ENCODE measurements at regions of chr13 and their contacts with region 1.

Region 1: DNA sequence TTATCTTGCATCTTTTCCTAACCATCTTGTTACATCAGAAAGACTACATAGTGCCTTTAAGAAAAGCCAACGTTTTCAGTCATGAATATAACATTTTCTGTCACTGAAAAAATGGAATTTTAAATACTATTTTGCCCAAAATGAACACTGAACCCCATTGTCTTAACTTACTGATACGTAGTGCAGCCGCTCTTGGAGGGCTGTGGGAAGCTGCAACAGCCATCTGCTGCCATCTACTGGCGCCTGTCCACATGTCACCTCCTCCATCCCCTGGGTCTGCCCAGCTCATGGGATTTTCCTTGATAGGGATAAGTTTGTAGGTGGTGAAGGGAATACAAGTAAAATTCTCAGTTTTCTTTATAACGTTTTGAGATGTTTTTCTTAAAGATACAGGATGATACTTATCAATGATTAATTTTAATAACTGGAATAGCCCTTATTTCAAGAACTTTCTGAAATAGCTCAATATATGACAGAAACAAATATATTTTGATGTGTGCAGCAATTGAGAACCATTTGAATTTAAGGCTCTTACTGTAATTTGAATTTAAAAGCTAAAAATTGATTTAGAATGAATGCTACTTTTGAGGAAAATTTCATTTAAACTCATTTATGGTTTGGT is 73.7 kb downstream of the GGACT start:
- DNase-seq: peak; percentile 82
- H3K4me3 Mint-ChIP-seq: no peak overlapping the region
- H3K27ac Mint-ChIP-seq: no peak overlapping the region
- H3K4me1 Mint-ChIP-seq: peaks cover 21% of the 10 kb centered on the region
- H3K27me3 Mint-ChIP-seq: peaks cover 14% of the 10 kb centered on the region

Region 2: GRCh38 chr13:99909824-99910619 is 604.9 kb before region 1 on chr13:
- CTCF ChIA-PET with region 1: interaction called, 24 read pairs
- POLR2A ChIA-PET with region 1: no interaction called
- intact Hi-C with region 1: no loop called
- DNase-seq: no peak
- H3K4me3 Mint-ChIP-seq: no peak overlapping the region
- H3K27ac Mint-ChIP-seq: no peak overlapping the region
- H3K4me1 Mint-ChIP-seq: peaks cover 19% of the 10 kb centered on the region
- H3K27me3 Mint-ChIP-seq: peaks cover 21% of the 10 kb centered on the region

Region 3: DNA sequence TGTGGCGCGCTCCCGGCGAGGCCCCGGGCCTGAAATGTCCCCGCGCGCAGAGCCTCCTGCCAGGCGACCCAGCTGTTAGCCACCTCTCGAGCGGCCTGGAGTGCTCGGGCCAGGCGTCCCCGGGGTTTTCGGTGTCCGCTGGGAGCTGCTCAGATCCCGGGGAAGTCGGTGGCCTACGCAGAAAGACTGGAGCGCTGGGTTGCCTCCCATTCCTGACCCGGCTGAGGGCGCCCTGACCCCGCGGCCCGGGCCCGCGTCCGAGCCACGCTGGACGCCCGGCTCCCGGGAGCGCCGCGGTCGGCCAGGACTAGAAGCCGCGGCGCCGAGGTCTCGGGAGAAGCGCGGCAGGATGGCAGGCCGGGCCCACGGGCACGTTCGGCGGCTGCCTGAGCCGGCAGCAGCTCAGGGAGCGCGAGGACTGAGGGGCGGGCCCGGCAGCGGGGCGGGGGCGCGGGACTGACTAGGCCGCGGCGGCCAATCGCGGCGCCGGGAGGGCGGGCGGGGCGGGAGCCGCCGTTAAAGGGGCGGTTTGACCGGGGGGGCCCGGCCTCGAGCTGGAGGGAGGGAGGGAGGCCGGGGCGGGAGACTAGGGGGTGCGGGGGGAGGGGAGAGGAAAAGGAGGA is 534.6 kb before region 1 on chr13:
- CTCF ChIA-PET with region 1: interaction called, 5 read pairs
- POLR2A ChIA-PET with region 1: no interaction called
- intact Hi-C with region 1: loop called (anchors 10 kb)
- DNase-seq: peak; percentile 66
- H3K4me3 Mint-ChIP-seq: no peak overlapping the region
- H3K27ac Mint-ChIP-seq: no peak overlapping the region
- H3K4me1 Mint-ChIP-seq: peaks cover 18% of the 10 kb centered on the region
- H3K27me3 Mint-ChIP-seq: peaks cover 66% of the 10 kb centered on the region

Region 4: GRCh38 chr13:100235311-100235901 is 279.5 kb before region 1 on chr13:
- CTCF ChIA-PET with region 1: interaction called, 19 read pairs
- POLR2A ChIA-PET with region 1: no interaction called
- intact Hi-C with region 1: loop called (anchors 2 kb)
- DNase-seq: no peak
- H3K4me3 Mint-ChIP-seq: no peak overlapping the region
- H3K27ac Mint-ChIP-seq: no peak overlapping the region
- H3K4me1 Mint-ChIP-seq: peaks cover 4% of the 10 kb centered on the region
- H3K27me3 Mint-ChIP-seq: no peaks in the 10 kb centered on the region

Region 5: DNA sequence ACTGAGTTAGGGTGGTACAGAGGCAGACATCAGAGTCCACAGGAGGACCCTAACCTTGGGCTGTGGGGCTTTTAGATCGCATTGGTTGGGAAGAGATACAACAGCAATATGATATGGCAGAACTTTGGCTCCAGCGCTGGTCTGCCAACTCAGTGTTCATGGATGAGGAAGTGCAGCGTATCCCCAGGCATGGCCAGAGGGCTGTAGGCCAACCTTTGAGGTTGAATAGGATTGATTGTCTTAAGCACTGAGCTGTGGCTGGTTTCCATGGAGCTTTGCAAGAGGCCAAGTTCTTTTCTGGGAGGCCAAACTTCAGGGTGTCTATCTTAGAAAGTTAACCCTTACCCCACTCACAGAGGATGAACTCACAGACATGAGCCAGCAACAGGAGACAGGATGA is 303.8 kb after region 1 on chr13:
- CTCF ChIA-PET with region 1: no interaction called
- POLR2A ChIA-PET with region 1: no interaction called
- intact Hi-C with region 1: no loop called
- DNase-seq: no peak
- H3K4me3 Mint-ChIP-seq: no peak overlapping the region
- H3K27ac Mint-ChIP-seq: no peak overlapping the region
- H3K4me1 Mint-ChIP-seq: no peaks in the 10 kb centered on the region
- H3K27me3 Mint-ChIP-seq: peaks cover 9% of the 10 kb centered on the region

Region 6: GRCh38 chr13:101397742-101398141 is 882.8 kb after region 1 on chr13:
- CTCF ChIA-PET with region 1: no interaction called
- POLR2A ChIA-PET with region 1: no interaction called
- intact Hi-C with region 1: no loop called
- DNase-seq: no peak
- H3K4me3 Mint-ChIP-seq: no peak overlapping the region
- H3K27ac Mint-ChIP-seq: no peak overlapping the region
- H3K4me1 Mint-ChIP-seq: no peaks in the 10 kb centered on the region
- H3K27me3 Mint-ChIP-seq: peaks cover 3% of the 10 kb centered on the region